ENCODE measurements at regions of chr20 and their contacts with region 1.

Region 1: DNA sequence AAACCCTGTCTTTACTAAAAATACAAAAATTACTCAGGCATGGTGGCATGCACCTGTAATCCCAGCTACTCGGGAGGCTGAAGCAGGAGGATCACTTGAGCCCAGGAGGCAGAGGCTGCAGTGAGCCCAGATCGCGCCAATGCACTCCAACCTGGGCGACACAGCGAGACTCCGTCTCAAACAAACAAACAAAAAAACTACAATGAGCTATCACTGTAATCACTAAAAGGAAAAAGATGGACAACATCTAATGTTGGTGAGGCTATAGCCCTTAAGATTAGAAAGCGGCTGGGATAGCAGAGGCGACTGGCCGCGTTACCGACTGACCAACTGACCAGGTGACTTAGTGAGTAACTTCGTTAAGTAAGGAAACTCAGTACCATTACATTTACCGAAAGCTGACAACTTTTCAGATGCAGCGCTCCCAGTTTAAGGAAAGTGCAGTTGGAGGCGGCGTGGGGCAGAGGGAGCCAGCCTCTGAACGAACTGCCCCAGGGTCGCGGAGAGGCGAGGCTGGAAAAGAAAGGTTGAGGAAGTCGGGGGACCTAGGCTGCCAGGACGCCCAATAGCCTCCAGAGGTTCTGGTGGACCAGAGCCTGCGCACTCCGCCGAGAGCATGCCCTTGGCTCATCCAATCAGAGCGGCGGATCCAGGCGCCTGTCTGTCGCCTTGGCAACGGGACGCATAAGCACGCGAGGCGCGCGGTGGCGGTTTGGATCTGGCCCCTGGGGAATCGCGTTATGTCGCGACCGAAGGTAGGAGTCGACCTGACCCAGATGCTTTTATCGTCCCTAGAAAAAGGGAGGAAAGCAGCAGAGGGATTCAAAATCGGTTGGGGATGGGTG is 8.9 kb downstream of the TTLL9 start:
- DNase-seq: peak; percentile 99 to 100
- H3K4me3 ChIP-seq: peak overlapping the region; percentile 82
- H3K4me3 Mint-ChIP-seq: peak overlapping the region; percentile 88
- H3K27ac Mint-ChIP-seq: peak overlapping the region; percentile 95
- H3K4me1 ChIP-seq: no peaks in the 10 kb centered on the region
- H3K4me1 Mint-ChIP-seq: peaks cover 12% of the 10 kb centered on the region
- H3K27me3 ChIP-seq: no peaks in the 10 kb centered on the region
- H3K27me3 Mint-ChIP-seq: peaks cover 2% of the 10 kb centered on the region
- CTCF ChIP-seq: no peak

Region 2: GRCh38 chr20:31861346-31862156 is 17.8 kb before region 1 on chr20:
- CTCF ChIA-PET with region 1: interaction called, 4 read pairs
- POLR2A ChIA-PET with region 1: no interaction called
- intact Hi-C with region 1: loop called (anchors 1 kb)
- DNase-seq: peak; percentile 91
- H3K4me3 ChIP-seq: peak overlapping the region; percentile 75
- H3K4me3 Mint-ChIP-seq: peak overlapping the region; percentile 78
- H3K27ac Mint-ChIP-seq: peak overlapping the region; percentile 5
- H3K4me1 ChIP-seq: peaks cover 16% of the 10 kb centered on the region
- H3K4me1 Mint-ChIP-seq: peaks cover 8% of the 10 kb centered on the region
- H3K27me3 ChIP-seq: no peaks in the 10 kb centered on the region
- H3K27me3 Mint-ChIP-seq: peaks cover 7% of the 10 kb centered on the region
- CTCF ChIP-seq: no peak